ENCODE measurements at regions of chr17 and their contacts with region 1.

Region 1: DNA sequence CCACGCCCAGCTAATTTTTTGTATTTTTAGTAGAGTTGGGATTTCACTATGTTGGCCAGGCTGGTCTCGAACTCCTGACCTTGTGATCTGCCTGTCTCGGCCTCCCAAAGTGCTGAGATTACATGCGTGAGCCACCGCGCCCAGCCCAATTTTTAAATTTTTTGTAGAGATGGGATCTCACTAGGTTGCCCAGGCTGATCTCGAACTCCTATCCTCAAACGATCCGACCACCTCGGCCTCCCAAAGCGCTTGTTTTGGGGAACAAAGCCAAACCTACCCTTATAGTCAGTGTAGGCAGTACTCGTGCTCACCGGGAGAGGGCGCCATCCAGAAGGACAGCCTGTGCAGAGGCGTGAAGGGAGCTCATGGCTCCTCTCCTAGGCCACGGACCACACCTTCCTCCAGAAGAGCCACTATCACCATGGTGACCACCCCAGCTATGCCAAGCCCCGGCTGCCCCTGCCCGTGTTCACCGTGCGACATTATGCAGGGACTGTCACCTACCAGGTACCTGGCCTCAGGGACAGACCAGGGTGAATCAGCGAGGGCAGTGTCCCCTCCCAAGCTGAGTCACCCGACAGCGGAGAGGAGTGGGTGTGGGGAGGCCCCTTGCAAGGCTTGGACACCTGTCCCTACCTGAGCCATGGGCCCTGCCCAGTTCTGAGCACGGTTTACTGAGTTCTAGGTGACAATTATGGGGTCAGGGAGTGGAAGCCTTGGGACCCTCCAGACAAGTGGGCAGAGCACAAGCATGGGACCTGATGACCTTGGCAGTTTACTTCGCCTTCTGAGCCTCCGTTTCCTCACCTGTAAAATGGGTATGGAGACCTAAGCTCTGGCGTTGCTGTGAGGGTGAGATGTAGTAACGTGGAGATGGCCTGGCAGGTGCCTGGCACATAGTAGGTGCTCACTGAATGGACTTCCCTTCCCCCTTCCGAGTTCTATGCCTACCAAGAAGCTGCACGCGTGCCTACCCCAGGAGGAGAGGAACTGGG is 13.8 kb downstream of the MYO15B start:
- DNase-seq: peak; percentile 47 to 97
- H3K4me3 ChIP-seq: no peak overlapping the region
- H3K27ac ChIP-seq: no peak overlapping the region
- H3K4me1 ChIP-seq: no peaks in the 10 kb centered on the region; a peak in 1 of 7 replicates
- H3K27me3 ChIP-seq: no peaks in the 10 kb centered on the region
- CTCF ChIP-seq: peak; percentile 88 to 98 (median 95)
- EP300 ChIP-seq: no peak
- POLR2A ChIP-seq: no peak
- RAD21 ChIP-seq: peak; percentile 55 to 71

Region 2: GRCh38 chr17:75468291-75468754 is 133.0 kb before region 1 on chr17:
- CTCF ChIA-PET with region 1: no interaction called
- POLR2A ChIA-PET with region 1: no interaction called
- DNase-seq: no peak
- H3K4me3 ChIP-seq: no peak overlapping the region
- H3K27ac ChIP-seq: no peak overlapping the region
- H3K4me1 ChIP-seq: no peaks in the 10 kb centered on the region
- H3K27me3 ChIP-seq: no peaks in the 10 kb centered on the region
- CTCF ChIP-seq: no peak
- EP300 ChIP-seq: no peak
- POLR2A ChIP-seq: no peak
- RAD21 ChIP-seq: no peak

Region 3: GRCh38 chr17:75589012-75589918 is 12.1 kb before region 1 on chr17:
- CTCF ChIA-PET with region 1: interaction called, 42 read pairs
- POLR2A ChIA-PET with region 1: interaction called, 7 read pairs
- DNase-seq: peak; percentile 88 to 94
- H3K4me3 ChIP-seq: peak overlapping the region; percentile 40 to 67 (median 58); a peak in 7 of 8 replicates
- H3K27ac ChIP-seq: no peak overlapping the region; the same call in 1 of the 2 replicates
- H3K4me1 ChIP-seq: peaks cover 0 to 9% (median 3%) of the 10 kb centered on the region in 4 experiments; a peak in 5 of 7 replicates
- H3K27me3 ChIP-seq: peaks cover 0 to 19% (median 5%) of the 10 kb centered on the region in 4 experiments; a peak in 4 of 7 replicates
- CTCF ChIP-seq: peak; percentile 61 to 77 (median 72)
- EP300 ChIP-seq: peak in 1 of 2 experiments; percentile 79; a peak in 1 of 3 replicates
- POLR2A ChIP-seq: peak in 1 of 2 experiments; percentile 45; a peak in 1 of 3 replicates
- RAD21 ChIP-seq: peak; percentile 49 to 57; a peak in 3 of 4 replicates

Region 4: GRCh38 chr17:75614006-75614405 is 12.7 kb after region 1 on chr17:
- CTCF ChIA-PET with region 1: interaction called, 2,200 read pairs
- POLR2A ChIA-PET with region 1: interaction called, 19 read pairs
- DNase-seq: no peak
- H3K4me3 ChIP-seq: no peak overlapping the region
- H3K27ac ChIP-seq: no peak overlapping the region
- H3K4me1 ChIP-seq: no peaks in the 10 kb centered on the region
- H3K27me3 ChIP-seq: no peaks in the 10 kb centered on the region
- CTCF ChIP-seq: peak; percentile 55 to 64 (median 59)
- EP300 ChIP-seq: no peak
- POLR2A ChIP-seq: no peak
- RAD21 ChIP-seq: peak; percentile 31 to 47; a peak in 3 of 4 replicates

Region 5: DNA sequence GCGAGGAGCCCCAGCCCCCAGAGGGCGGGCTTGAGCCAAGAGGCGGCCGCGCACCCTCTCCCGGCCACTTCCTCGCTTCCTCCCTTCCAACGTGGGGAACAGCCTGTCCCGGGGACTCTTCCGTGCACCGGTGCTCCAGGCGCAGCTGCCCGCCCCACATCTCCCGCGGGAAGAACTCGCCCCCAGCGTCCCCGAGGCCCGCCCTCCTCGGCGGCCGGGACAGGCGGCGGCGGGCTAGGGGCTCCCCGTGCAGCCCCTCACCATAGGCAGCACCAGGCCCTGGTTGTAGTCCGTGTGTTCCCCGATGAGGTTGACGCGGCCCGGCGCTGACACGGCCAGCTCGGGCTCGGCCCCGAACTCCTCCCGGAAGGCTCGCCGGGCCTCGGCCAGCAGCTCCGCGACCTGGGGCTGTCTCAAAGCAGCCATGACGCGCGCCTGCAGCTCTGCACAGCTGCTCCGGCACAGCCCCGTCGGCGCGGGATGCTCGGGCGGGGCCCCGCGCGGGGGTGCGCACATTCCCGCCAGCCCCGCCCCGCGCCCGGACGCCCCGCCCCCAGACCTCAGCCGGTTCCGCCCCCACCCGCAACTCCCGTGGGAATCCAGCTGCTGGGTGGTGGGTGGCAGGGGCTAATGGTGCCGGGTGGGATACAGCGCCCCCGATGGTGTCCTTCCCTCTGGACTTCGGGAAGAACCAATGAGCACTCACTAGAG is 163.5 kb after region 1 on chr17 and contains the start of gene GALK1:
- CTCF ChIA-PET with region 1: interaction called, 15 read pairs
- POLR2A ChIA-PET with region 1: no interaction called
- DNase-seq: peak in 1 of 2 experiments; percentile 82
- H3K4me3 ChIP-seq: peak within 1 kb of the TSS; percentile 50 to 88 (median 62)
- H3K27ac ChIP-seq: no peak within 1 kb of the TSS
- H3K4me1 ChIP-seq: peaks cover 0 to 8% (median 6%) of the 10 kb centered on the region in 4 experiments; a peak in 5 of 7 replicates
- H3K27me3 ChIP-seq: peaks cover 0 to 2% (median 0%) of the 10 kb centered on the region in 4 experiments; a peak in 1 of 7 replicates
- CTCF ChIP-seq: peak; percentile 67 to 74 (median 67)
- EP300 ChIP-seq: no peak
- POLR2A ChIP-seq: no peak
- RAD21 ChIP-seq: peak; percentile 31 to 45
- total RNA-seq, gene GALK1: 31.0 and 34.1 TPM in 2 replicates